Left cardiac atrium (tissue), 4 donors: ENCODE measurements at regions of chr5 and their contacts with region 1.

Region 1: GRCh38 chr5:178331399-178331996 is 98.9 kb upstream of the PHYKPL start:
- DNase-seq: peak; percentile 76
- ATAC-seq: peak; percentile 85 to 87

Region 2: GRCh38 chr5:178288381-178289368 is 42.8 kb before region 1 on chr5:
- intact Hi-C with region 1: loop called in 1 of 2 experiments (anchors 2 kb)
- DNase-seq: peak; percentile 37
- ATAC-seq: no peak

Region 3: DNA sequence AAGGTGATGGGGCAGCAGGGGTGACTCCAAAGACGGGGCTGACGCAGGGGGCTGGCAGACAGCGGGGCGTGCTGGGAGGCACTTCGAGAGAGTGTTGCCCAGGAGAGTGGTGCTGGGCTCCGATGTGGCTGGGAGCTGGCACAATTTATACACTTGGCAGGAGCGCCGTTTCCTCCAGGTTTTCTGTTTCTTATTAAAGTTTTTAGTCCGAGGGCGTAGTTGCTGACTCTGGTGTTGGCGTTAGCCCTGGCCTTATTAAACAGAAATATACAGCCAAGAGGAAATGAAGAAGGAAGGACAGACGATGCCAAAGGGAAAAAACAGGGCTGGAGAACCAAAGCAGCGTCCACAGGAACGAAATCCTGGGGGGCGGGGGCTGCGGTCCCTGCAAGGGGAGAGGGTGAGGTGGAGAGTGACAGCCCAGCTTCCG is 40.7 kb after region 1 on chr5:
- intact Hi-C with region 1: no loop called
- DNase-seq: peak; percentile 46
- ATAC-seq: peak; percentile 48 to 51

Region 4: DNA sequence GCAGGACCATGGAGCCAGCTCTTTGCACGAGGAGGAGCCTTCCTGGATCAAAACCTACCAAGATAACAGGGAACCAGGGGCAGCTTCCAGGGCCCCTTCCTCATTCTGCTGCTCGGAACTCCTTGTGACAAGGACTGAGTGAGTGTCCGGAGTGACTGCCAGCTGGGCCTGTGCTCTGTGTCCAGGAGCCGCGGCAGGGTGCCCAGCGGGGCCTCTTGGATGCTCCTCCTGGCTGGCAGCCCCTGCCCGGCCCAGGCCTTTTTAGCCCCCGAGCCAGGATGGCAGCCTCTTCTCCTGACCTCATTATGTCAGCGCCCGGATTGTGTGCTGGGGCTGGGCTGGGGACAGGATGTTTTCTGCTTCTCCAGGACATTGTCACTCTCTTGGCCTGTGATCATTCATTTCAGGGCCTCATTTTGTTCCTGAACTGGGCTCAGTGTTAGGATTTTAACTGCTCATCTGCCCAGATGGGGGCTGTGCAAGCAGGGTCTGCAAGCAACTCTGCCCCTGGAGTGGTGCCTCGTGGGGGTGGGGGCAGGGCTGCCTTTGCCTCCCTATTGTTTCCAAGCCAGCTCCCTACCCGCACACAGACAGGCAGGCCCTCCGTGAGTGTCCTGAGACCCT is 97.0 kb after region 1 on chr5:
- intact Hi-C with region 1: loop called in 1 of 2 experiments (anchors 10 kb)
- DNase-seq: peak; percentile 74
- ATAC-seq: peak; percentile 92

Region 5: DNA sequence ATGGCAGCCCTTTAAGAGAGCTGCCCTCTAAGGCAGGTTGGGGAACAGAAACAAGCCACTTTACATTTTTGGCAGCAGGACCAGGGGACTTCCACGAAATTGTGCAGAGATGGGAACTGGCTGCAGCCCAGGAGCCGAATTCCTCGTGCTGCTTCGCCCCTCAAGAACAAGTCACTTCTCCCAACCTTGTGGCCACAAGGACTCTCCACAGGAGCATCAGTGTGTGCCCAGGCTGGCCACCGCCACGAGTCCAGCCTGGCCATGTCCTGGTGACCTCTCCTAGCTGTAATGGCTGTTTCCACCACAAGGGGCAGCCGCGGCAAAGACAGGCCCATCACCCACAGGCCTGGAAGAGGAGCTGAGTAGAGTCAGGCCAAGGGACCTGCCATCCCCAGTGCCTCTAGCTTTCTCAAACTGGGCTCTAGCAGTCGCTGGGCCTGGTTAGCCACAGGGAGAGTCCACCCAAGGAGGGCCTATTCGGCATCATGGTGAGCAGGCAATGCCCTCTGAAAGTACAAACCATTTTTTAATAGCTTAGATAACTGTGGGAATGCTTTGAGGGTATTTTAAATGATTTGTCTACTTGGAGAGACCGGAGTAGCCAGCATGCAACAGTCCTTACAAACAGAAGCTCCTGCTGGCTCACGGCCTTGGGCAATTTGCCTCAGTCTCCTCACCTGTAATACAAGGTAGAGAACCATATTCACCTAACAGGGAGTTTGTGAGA is 129.7 kb after region 1 on chr5:
- intact Hi-C with region 1: loop called in 1 of 2 experiments (anchors 5 kb)
- DNase-seq: peak; percentile 85
- ATAC-seq: peak; percentile 97 to 99